Activated CD4-positive, alpha-beta memory T cell treated with anti-CD3 and anti-CD28 coated beads, Interleukin-2, amount 10 ng/mL, durations not matched to agents 7 days and 5 days (primary cell): ENCODE measurements at regions of chr16 and their contacts with region 1.

Region 1: GRCh38 chr16:2009789-2010510 is at the start of gene ZNF598:
- DNase-seq: peak; percentile 83
- H3K4me3 Mint-ChIP-seq: peak within 1 kb of the TSS; percentile 92
- H3K27ac Mint-ChIP-seq: peak within 1 kb of the TSS; percentile 88
- H3K4me1 Mint-ChIP-seq: peaks cover 41% of the 10 kb centered on the region
- H3K27me3 Mint-ChIP-seq: no peaks in the 10 kb centered on the region
- total RNA-seq, gene ZNF598: 52.1 to 53.6 TPM

Region 2: DNA sequence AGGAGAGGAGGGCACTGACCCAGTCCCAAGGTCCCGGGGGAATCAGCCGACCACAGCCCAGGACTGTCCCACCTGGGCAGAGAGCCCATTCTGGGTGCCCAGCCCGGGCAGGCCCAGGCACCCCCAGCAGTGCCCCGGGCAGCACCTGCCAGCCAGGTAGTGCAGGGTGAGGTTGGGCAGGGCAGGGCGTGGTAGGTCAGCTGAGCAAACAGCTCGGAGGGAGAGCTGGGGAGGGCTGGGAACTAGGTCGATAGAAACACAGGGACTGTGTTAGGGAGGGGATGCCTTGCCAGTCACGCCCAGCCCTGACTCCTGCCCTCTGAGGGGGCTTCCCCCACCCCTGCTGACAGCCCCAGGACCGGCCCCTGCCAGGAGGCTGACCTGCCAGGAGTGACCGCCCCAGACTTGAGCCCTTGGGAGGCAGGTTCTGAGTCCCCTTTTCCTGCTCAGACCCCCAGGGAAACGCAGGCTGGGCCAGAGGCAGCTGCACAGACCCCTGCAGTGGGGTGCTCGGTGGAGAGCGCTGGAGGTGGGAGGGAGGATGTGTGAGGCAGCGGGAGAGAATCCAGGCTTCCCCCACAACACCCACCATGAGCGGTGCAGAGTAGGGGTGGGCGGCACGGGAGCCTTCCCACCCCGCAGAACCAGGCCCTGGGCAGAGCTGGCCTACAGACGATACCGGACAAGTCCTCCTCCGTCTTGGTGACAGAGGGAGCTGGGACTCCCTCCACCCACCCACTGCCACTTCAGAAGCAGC is 96.4 kb before region 1 on chr16:
- CTCF ChIA-PET with region 1: no interaction called
- POLR2A ChIA-PET with region 1: no interaction called
- DNase-seq: no peak
- H3K4me3 Mint-ChIP-seq: no peak overlapping the region
- H3K27ac Mint-ChIP-seq: no peak overlapping the region
- H3K4me1 Mint-ChIP-seq: no peaks in the 10 kb centered on the region
- H3K27me3 Mint-ChIP-seq: peaks cover 29% of the 10 kb centered on the region

Region 3: DNA sequence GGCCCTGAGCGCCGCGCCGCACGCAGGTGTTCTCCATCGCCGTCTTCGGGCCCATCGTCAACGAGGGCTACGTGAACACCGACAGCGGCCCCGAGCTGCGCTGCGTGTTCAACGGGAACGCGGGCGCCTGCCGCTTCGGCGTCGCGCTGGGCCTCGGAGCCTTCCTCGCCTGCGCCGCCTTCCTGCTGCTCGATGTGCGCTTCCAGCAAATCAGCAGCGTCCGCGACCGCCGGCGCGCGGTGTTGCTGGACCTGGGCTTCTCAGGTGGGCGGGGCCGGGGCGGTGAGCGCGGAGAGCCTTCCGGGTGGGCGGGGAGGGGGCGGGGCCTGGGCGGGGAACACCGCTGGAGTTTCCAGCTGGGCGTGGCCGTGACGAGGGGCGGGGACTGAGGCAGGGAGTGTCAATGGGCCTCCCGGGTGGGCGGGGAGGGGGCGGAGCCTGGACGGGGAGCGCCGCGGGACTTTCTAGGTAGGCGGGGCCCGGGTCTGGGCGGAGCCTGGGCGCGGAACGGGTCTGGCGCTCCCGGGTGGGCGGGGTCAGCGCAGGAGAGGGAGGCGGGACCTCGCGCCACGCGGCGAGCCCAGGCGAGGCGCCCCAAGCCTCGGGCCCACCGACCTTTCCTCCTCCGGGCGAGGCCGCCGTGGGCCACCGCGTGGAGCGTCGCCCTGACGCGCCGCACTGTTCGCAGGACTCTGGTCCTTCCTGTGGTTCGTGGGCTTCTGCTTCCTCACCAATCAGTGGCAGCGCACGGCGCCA is 17.8 kb before region 1 on chr16:
- CTCF ChIA-PET with region 1: interaction called, 36 read pairs
- POLR2A ChIA-PET with region 1: interaction called, 27 read pairs
- DNase-seq: peak; percentile 98
- H3K4me3 Mint-ChIP-seq: peak overlapping the region; percentile 73
- H3K27ac Mint-ChIP-seq: peak overlapping the region; percentile 35
- H3K4me1 Mint-ChIP-seq: peaks cover 37% of the 10 kb centered on the region
- H3K27me3 Mint-ChIP-seq: peaks cover 14% of the 10 kb centered on the region

Region 4: GRCh38 chr16:2033057-2033908 is 23.3 kb after region 1 on chr16:
- CTCF ChIA-PET with region 1: no interaction called
- POLR2A ChIA-PET with region 1: no interaction called
- DNase-seq: no peak
- H3K4me3 Mint-ChIP-seq: no peak overlapping the region
- H3K27ac Mint-ChIP-seq: no peak overlapping the region
- H3K4me1 Mint-ChIP-seq: no peaks in the 10 kb centered on the region
- H3K27me3 Mint-ChIP-seq: peaks cover 8% of the 10 kb centered on the region